ENCODE measurements at regions of chr10 and their contacts with region 1.

Region 1: GRCh38 chr10:89643431-89644331 is 1.4 kb downstream of the PANK1 start:
- DNase-seq: peak; percentile 99
- H3K4me3 Mint-ChIP-seq: no peak overlapping the region
- H3K27ac Mint-ChIP-seq: no peak overlapping the region
- H3K4me1 Mint-ChIP-seq: peaks cover 31% of the 10 kb centered on the region
- H3K27me3 Mint-ChIP-seq: no peaks in the 10 kb centered on the region
- CTCF ChIP-seq: no peak

Region 2: DNA sequence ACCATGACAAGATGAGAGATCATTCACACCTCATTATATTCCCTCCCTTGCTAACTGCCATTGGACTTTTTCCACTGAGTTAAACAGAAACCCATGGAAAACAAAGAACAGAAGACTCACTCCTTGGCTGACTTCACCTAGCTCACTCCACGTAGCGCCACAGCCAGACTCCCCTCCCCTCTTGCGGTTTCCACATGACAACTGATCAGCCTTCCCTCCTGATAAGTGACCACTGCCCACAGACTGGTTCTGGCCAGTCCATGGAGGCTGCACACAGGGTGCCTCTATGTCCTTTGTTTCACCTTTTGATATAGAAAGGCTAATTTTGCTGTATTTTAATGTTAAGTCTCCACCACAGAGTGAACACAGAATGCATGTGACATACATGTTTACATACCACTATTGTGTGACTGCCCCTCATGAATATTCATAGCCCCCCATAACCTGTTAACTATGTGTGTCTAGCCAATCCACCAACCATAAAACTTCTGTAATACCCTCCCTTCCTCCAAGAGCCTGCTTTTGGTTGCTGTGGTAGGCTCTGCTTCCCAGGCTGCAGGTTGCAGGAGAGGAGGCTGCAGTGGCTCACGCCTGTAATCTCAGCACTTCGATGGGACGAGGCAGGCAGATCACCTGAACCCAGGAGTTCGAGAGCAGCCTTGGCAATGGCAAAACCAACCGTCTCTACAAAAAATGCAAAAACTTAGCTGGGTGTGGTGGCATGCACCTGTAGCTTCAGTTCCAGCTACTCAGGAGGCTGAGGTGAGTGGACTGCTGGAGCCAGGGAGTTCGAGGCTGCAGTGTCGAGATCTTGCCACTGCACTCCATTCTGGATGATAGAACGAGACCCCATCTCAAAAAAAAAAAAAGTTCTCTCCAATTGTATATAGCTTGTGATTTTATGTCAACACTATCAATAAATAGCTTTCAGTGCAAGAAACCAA is 239.3 kb before region 1 on chr10:
- CTCF ChIA-PET with region 1: no interaction called
- POLR2A ChIA-PET with region 1: no interaction called
- intact Hi-C with region 1: no loop called
- DNase-seq: no peak
- H3K4me3 Mint-ChIP-seq: no peak overlapping the region
- H3K27ac Mint-ChIP-seq: no peak overlapping the region
- H3K4me1 Mint-ChIP-seq: no peaks in the 10 kb centered on the region
- H3K27me3 Mint-ChIP-seq: no peaks in the 10 kb centered on the region
- CTCF ChIP-seq: no peak

Region 3: DNA sequence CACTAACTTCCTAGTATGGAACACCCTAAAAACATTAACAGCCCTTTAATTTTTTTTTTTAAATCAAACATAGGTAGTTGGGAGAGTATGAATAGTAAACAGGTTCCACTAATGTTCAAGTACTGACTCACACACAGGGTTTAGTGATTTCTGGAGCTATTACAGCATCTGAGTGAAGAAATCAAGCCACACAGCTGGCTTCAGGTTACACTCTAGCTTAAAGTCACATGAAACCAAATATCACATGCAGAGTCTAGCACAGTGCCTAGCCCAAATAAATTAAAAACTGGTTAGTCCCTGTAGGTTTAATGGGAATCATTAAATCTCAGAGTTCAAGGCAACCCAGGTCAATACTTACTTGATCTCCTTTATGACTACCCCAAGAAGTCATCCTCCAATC is 10.2 kb before region 1 on chr10:
- CTCF ChIA-PET with region 1: interaction called, 4 read pairs
- POLR2A ChIA-PET with region 1: interaction called, 79 read pairs
- intact Hi-C with region 1: no loop called
- DNase-seq: peak; percentile 79
- H3K4me3 Mint-ChIP-seq: no peak overlapping the region
- H3K27ac Mint-ChIP-seq: peak overlapping the region; percentile 54
- H3K4me1 Mint-ChIP-seq: peaks cover 20% of the 10 kb centered on the region
- H3K27me3 Mint-ChIP-seq: no peaks in the 10 kb centered on the region
- CTCF ChIP-seq: no peak

Region 4: DNA sequence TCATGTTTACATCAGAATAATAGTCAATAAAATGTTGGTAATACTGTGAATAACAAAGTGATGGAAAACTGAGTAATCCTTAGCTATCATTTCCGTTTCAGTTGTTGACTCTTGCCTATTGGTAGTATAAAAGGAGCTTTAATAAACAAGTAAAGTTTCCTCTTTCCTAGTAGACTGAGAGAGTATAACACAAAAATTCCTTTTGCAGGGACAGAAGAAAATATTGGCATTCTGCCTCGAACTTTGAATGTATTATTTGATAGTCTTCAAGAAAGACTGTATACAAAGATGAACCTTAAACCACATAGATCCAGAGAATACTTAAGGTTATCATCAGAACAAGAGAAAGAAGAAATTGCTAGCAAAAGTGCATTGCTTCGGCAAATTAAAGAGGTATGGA is 67.1 kb after region 1 on chr10:
- CTCF ChIA-PET with region 1: interaction called, 3 read pairs
- POLR2A ChIA-PET with region 1: interaction called, 25 read pairs
- intact Hi-C with region 1: no loop called
- DNase-seq: no peak
- H3K4me3 Mint-ChIP-seq: no peak overlapping the region
- H3K27ac Mint-ChIP-seq: peak overlapping the region; percentile 50
- H3K4me1 Mint-ChIP-seq: peaks cover 19% of the 10 kb centered on the region
- H3K27me3 Mint-ChIP-seq: no peaks in the 10 kb centered on the region
- CTCF ChIP-seq: no peak

Measured in MCF 10A (cell line).